ENCODE measurements at regions of chr5 and their contacts with region 1.

Region 1: GRCh38 chr5:14879937-14880589 is 8.5 kb upstream of the ANKH start:
- DNase-seq: no peak
- ATAC-seq: no peak
- H3K4me3 ChIP-seq: no peak overlapping the region
- H3K27ac ChIP-seq: no peak overlapping the region
- H3K4me1 ChIP-seq: peaks cover 0 to 55% (median 29%) of the 10 kb centered on the region in 9 donors
- H3K27me3 ChIP-seq: no peaks in the 10 kb centered on the region
- CTCF ChIP-seq: no peak

Region 2: DNA sequence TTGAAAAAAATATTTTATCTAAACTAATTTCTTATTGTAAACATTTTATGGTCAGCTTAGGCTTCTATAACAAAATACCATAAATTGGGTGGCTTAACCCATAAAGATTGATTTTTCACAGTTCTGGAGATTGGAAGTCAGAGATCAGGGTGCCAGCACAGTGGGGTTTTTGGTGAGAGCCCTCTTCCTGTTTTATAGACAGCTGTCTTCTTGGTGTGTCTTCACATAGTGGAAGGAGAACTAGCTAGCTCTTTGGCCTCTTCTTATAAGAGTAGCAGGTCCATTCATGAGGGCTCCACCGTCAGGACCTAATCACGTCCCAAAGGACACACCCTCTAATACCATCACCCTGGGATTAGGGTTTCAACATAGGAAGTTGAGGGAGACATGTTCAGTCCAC is 271.9 kb before region 1 on chr5:
- intact Hi-C with region 1: no loop called
- DNase-seq: no peak
- ATAC-seq: no peak
- H3K4me3 ChIP-seq: no peak overlapping the region
- H3K27ac ChIP-seq: no peak overlapping the region
- H3K4me1 ChIP-seq: peaks cover 0 to 19% (median 0%) of the 10 kb centered on the region in 9 donors
- H3K27me3 ChIP-seq: peaks cover 0 to 3% (median 0%) of the 10 kb centered on the region in 7 donors
- CTCF ChIP-seq: no peak

Region 3: GRCh38 chr5:14676320-14676719 is 203.7 kb before region 1 on chr5:
- intact Hi-C with region 1: no loop called
- DNase-seq: no peak
- ATAC-seq: peak; percentile 27 to 61 (median 40)
- H3K4me3 ChIP-seq: peak overlapping the region in 2 of 10 donors; percentile 1 to 2
- H3K27ac ChIP-seq: peak overlapping the region in 9 of 10 donors; percentile 2 to 87 (median 59)
- H3K4me1 ChIP-seq: peaks cover 13 to 85% (median 59%) of the 10 kb centered on the region in 9 donors
- H3K27me3 ChIP-seq: no peaks in the 10 kb centered on the region
- CTCF ChIP-seq: no peak

Region 4: DNA sequence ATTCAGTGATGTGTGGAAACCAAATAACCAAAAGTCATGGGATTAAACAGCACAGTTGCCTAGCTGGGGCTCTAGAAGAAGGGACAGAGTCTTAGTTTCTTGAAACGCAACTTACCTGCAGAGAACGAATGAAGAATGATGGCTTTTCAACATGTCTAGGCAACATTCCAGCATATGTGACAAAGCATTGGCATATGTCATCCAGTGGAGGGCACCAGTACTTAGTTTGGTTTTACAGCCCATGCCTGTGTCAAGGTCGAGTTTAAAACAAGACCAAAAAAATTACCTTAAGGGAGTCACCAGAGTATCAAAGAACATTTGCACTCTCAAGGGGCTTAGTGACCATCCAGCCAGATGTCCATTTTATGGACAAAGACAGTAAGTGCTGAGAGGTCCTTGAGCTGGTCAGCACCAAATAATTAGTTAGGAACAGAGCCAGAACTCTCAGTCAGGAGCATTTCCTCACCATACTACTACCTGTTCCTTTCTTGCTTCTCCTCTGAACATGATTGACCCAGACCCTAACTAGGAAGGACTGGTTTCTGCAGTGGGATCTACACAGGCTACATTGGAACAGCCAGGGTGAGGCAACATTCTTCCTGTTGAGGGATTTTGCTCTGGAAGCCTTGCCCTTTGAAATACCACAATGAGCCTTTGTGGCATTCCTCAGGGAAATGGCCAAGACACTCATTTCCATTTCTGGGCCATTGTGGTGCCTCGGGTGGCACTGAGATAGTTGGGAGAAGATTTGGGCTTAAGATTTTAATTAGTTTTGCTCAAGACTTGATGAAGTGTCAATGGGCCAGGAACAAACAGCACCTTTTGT is 67.0 kb after region 1 on chr5:
- intact Hi-C with region 1: loop called in 1 of 10 experiments (anchors 10 kb)
- DNase-seq: peak in 1 of 2 donors; percentile 28
- ATAC-seq: peak; percentile 55 to 82 (median 66)
- H3K4me3 ChIP-seq: no peak overlapping the region
- H3K27ac ChIP-seq: no peak overlapping the region
- H3K4me1 ChIP-seq: peaks cover 0 to 13% (median 8%) of the 10 kb centered on the region in 9 donors
- H3K27me3 ChIP-seq: no peaks in the 10 kb centered on the region
- CTCF ChIP-seq: peak in 8 of 9 donors; percentile 18 to 64 (median 50)

Region 5: DNA sequence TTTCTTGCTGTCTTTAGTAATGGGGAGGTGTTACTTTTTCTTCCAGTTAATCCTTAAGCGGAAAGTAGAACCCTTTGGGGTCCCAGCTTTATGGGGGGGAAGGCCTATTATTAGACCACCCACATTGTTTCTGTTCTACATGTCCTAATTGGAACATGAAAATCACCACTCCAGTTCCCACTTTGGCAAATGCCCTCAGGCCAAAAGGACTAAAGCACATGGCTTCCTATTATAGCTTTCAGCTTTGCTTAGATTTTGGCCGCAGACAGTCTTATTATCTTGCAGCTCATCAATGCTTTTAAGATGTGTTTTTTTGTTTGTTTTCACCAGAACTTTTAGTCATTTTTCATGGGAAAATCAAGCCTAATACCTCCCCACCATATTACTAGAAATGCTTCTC is 288.3 kb after region 1 on chr5:
- intact Hi-C with region 1: no loop called
- DNase-seq: no peak
- ATAC-seq: no peak
- H3K4me3 ChIP-seq: no peak overlapping the region
- H3K27ac ChIP-seq: no peak overlapping the region
- H3K4me1 ChIP-seq: peaks cover 0 to 11% (median 0%) of the 10 kb centered on the region in 9 donors
- H3K27me3 ChIP-seq: no peaks in the 10 kb centered on the region
- CTCF ChIP-seq: no peak

Region 6: DNA sequence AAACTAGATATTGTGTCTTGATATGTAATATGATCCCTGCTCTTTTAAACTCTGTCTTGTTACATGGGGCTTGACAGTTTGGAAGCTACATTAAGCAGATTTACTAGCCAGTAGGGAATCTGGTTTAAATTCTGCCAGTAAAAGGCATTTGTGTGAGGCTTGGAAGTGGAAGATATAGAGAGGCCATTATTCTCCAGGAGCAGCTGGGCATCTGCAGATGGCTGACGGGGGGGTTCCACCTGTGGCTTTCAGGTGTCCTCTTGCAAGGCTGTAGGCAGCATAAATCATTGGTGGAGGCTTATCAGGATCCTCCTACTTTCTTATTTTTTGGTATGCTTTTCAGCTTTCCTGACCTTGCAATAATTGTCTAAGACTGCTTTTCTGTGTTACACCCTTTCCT is 440.8 kb after region 1 on chr5:
- intact Hi-C with region 1: no loop called
- DNase-seq: no peak
- ATAC-seq: no peak
- H3K4me3 ChIP-seq: no peak overlapping the region
- H3K27ac ChIP-seq: no peak overlapping the region
- H3K4me1 ChIP-seq: no peaks in the 10 kb centered on the region
- H3K27me3 ChIP-seq: no peaks in the 10 kb centered on the region
- CTCF ChIP-seq: no peak